Posterior vena cava (tissue), 2 donors: ENCODE measurements at regions of chr20 and their contacts with region 1.

Region 1: DNA sequence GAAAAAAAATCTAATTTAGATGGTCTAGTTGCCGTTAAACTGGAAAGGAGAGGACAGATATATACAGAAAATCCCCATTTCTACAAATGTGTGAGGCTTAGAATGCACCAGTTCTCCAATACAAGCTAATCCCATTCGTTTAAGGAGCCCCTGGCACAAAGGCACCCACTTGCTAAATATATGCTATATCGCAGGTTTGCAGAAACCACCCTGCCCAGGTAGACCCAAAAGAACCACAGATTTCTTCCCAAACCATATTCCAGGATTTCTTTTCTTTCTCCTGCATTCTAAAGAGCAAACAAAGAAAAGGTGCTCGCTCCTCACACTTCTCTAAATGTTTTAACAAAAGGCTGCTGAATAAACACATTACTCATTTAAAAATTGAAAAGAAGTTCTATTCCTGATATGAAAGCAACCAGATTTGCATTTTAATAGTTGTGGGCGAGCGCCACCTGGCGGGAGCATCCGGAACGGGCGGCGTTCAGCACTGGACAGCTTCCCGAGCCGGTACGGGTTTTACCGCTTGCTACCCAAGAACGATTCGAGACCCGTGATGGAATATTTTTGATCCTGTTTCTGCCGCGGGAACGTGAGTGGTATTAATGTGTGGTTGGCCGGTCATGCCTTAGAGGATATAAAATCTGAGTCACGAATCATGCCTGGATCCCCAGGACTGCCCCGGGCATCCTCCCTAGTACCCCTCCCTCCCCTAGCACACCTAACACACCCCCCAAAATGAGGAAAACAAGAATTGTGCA is 2.1 kb downstream of the PTPRT start:
- DNase-seq: peak; percentile 93

Region 2: DNA sequence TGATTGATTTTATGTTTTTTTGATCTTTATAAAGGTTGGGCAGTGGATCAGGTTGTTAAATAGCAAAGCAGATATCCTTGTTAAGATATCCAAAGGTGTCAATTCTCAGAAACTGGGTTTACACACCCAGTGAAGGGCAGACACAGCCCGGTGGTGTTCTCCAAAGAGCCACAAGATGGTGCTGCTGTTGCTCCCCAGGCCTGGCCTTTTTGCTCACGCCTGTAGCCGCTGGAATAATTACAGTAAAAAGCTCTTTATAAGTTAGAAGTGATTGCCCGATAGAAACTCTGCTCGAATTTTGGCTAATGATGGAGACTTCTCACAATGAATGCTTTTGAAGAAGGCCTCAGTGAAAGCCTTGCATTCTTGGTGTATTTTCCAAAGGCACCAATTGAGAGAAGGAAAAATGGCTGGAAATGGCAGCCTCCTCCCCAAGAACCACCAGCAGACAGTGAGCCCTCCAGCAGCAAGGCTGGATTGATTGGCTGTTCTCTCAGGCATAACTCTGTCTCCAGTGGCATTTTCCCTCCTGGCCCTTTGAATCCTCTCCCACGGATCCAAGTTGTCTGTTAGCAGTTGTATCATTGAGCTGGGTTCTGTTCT is 1449.0 kb before region 1 on chr20:
- intact Hi-C with region 1: loop called in 1 of 2 experiments (anchors 5 kb)
- DNase-seq: no peak